Upper lobe of right lung (tissue), 1 donor: ENCODE measurements at regions of chr1 and their contacts with region 1.

Region 1: DNA sequence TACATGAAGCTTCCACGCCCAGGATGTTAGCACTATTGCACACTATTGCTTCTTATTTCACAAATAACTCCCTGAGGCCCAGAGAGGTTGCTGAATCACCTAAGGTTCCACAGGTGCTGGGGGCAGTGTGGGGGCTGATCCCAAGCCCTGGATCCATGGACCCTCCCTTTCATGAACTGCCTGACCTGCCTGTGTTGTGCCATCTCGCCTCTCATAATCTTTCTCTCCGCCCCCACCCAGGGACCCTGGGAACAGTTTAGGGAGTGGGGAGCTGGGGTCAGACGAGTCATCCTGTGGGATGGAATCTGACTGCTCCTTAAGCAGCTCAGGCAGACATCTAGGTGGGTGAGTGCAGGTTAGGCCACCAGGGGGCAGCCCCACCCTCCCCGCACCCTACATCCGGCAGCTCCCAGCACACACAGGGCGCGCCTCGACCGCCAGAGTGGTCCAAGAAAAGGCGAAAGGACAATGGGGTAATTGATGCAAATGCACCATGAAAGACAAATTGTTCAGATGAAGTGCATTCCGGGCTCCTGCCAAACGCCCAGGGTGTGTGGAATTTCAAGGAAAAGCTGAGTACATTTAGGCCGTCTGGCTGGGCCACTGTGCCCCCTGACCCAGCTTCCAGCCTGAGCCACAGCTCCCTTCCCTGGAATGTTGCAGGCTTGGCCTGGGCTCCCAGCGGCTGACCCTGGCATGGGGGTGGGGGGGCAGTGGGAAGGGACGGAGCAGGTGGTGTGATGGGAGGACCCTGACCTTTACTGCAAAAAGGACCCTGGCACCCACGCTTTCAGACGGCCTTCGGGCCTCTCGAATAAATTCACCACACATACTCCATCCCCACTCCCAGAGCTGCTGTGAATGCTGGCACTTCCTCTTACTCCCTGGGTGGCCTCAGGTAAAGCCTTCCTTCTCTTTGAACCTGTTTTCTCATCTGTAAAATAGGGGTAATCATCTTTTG is 20.8 kb downstream of the PHLDA3 start:
- DNase-seq: peak; percentile 91
- ATAC-seq: peak; percentile 92
- H3K4me3 ChIP-seq: no peak overlapping the region
- H3K27ac ChIP-seq: peak overlapping the region; percentile 59
- H3K4me1 ChIP-seq: peaks cover 29% of the 10 kb centered on the region
- H3K27me3 ChIP-seq: no peaks in the 10 kb centered on the region
- CTCF ChIP-seq: peak; percentile 81

Region 2: GRCh38 chr1:201230676-201231075 is 217.5 kb before region 1 on chr1:
- intact Hi-C with region 1: no loop called
- DNase-seq: no peak
- ATAC-seq: no peak
- H3K4me3 ChIP-seq: no peak overlapping the region
- H3K27ac ChIP-seq: no peak overlapping the region
- H3K4me1 ChIP-seq: no peaks in the 10 kb centered on the region
- H3K27me3 ChIP-seq: no peaks in the 10 kb centered on the region
- CTCF ChIP-seq: no peak

Region 3: GRCh38 chr1:201361652-201362504 is 86.3 kb before region 1 on chr1:
- intact Hi-C with region 1: no loop called
- DNase-seq: peak; percentile 68
- ATAC-seq: peak; percentile 63
- H3K4me3 ChIP-seq: no peak overlapping the region
- H3K27ac ChIP-seq: no peak overlapping the region
- H3K4me1 ChIP-seq: no peaks in the 10 kb centered on the region
- H3K27me3 ChIP-seq: no peaks in the 10 kb centered on the region
- CTCF ChIP-seq: peak; percentile 80

Region 4: GRCh38 chr1:201506556-201507359 is 58.6 kb after region 1 on chr1 and contains the start of gene CSRP1:
- intact Hi-C with region 1: loop called (anchors 10 kb)
- DNase-seq: peak; percentile 95
- ATAC-seq: peak; percentile 92
- H3K4me3 ChIP-seq: peak within 1 kb of the TSS; percentile 88
- H3K27ac ChIP-seq: peak within 1 kb of the TSS; percentile 93
- H3K4me1 ChIP-seq: peaks cover 59% of the 10 kb centered on the region
- H3K27me3 ChIP-seq: no peaks in the 10 kb centered on the region
- CTCF ChIP-seq: no peak
- total RNA-seq, gene CSRP1: 280 TPM

Region 5: GRCh38 chr1:201538612-201539551 is 90.7 kb after region 1 on chr1 and contains the start of gene NAV1:
- intact Hi-C with region 1: no loop called
- DNase-seq: peak; percentile 77
- ATAC-seq: peak; percentile 83
- H3K4me3 ChIP-seq: peak within 1 kb of the TSS; percentile 58
- H3K27ac ChIP-seq: peak within 1 kb of the TSS; percentile 70
- H3K4me1 ChIP-seq: peaks cover 47% of the 10 kb centered on the region
- H3K27me3 ChIP-seq: peaks cover 11% of the 10 kb centered on the region
- CTCF ChIP-seq: no peak
- total RNA-seq, gene NAV1: 34.1 TPM

Region 6: DNA sequence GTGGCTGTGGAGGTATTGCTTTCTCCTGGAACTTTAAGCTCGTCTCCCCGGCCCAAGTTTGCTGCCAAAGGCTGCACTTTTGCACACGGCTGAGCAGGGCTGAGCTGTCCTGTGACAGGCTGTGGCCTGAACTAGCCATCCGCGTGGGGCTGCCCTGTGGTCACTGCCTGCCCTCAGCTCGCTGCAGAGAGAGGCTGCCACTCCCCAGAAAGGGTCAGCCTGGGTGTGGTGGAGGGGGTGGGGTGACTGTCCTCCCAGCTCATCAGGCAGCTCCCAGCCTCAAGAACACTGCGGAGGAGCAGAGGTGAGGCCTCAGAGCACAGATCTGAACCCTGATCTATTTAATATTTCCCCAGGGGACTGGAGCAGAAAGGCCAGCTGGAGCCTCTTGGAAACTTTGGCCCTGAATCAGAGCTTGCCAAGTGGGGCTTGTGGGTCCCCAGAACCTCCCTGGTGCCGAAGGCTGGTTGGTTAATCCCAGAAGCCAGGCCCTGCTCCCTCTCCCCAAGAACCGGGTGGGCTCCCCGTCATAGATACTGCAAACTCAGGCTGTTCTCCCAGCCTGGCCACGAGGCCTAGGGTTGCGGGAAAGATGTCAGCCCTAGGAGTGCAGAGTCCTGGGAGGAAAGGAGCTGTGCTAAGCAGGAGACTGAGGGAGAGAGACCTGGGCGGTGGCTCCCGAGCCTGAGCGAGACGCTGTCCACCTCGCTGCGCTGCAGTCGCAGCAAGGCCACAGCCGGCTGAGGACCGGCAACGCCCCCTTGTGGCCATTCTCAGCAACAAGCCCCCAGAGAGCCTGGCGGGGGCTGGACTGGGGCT is 255.6 kb after region 1 on chr1:
- intact Hi-C with region 1: no loop called
- DNase-seq: peak; percentile 92
- ATAC-seq: peak; percentile 98
- H3K4me3 ChIP-seq: no peak overlapping the region
- H3K27ac ChIP-seq: no peak overlapping the region
- H3K4me1 ChIP-seq: peaks cover 6% of the 10 kb centered on the region
- H3K27me3 ChIP-seq: no peaks in the 10 kb centered on the region
- CTCF ChIP-seq: peak; percentile 98